Spleen (tissue), 13 donors: ENCODE measurements at regions of chrX and their contacts with region 1.

Region 1: GRCh38 chrX:24054182-24055042 is at the start of gene EIF2S3:
- DNase-seq: peak; percentile 97
- H3K4me3 ChIP-seq: peak within 1 kb of the TSS in 4 of 8 donors; percentile 65 to 91 (median 72)
- H3K27ac ChIP-seq: peak within 1 kb of the TSS; percentile 81 to 92 (median 90)
- H3K4me1 ChIP-seq: peaks cover 0 to 11% (median 0%) of the 10 kb centered on the region in 6 donors
- H3K27me3 ChIP-seq: peaks cover 0 to 6% (median 0%) of the 10 kb centered on the region in 7 donors
- CTCF ChIP-seq: peak; percentile 42 to 92 (median 79)
- POLR2A ChIP-seq: no peak
- total RNA-seq, gene EIF2S3: 124 to 207 (median 162) TPM

Region 2: DNA sequence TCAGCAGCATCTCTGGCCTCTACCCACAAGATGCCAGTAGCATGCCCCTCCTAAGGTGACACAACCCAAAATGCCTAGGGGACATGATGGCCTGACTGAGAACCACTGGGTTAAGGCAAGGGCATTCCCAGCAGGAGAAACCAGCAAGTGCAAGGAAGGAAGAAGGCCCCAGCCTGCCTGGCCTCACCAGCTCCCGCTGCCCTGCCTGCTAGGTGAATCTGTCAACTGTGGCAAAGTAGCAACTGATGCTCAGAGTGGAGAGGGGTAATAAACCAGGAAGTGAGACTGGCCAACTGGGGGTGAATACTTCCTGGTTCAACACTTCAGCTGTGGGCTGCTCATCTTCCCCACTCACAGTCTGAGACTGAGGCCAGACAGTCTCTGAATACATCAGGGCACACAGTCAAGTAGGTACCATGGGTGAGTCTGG is 237.2 kb before region 1 on chrX:
- intact Hi-C with region 1: no loop called
- DNase-seq: peak; percentile 75
- H3K4me3 ChIP-seq: no peak overlapping the region
- H3K27ac ChIP-seq: peak overlapping the region in 4 of 8 donors; percentile 25 to 73 (median 50)
- H3K4me1 ChIP-seq: peaks cover 0 to 8% (median 0%) of the 10 kb centered on the region in 6 donors
- H3K27me3 ChIP-seq: no peaks in the 10 kb centered on the region
- CTCF ChIP-seq: no peak
- POLR2A ChIP-seq: no peak

Region 3: DNA sequence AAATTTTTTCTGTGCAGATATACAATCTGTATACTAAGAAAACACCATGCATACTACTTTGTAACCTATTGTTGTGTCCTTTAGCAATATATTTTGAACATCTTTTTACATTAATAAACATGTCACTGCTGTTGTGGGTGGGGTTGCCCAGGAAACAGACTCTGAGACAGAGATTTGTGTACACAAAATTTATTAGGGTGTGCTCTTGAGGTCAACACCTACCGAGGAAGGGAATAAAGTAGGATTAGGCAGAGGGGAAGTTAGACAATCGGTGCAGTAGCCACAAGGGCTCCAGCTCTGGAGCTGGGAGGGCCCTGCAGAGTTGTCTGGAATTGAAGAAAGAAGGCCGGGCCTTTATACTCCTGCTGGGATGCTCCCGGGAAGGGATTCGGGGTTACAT is 90.2 kb before region 1 on chrX:
- intact Hi-C with region 1: no loop called
- DNase-seq: no peak
- H3K4me3 ChIP-seq: no peak overlapping the region
- H3K27ac ChIP-seq: no peak overlapping the region
- H3K4me1 ChIP-seq: no peaks in the 10 kb centered on the region
- H3K27me3 ChIP-seq: no peaks in the 10 kb centered on the region
- CTCF ChIP-seq: no peak
- POLR2A ChIP-seq: no peak

Region 4: GRCh38 chrX:24149351-24150050 is 95.1 kb after region 1 on chrX and contains the start of gene ZFX:
- intact Hi-C with region 1: loop called (anchors 10 kb)
- DNase-seq: peak; percentile 96
- H3K4me3 ChIP-seq: peak within 1 kb of the TSS; percentile 45 to 83 (median 56)
- H3K27ac ChIP-seq: peak within 1 kb of the TSS; percentile 96 to 99 (median 98)
- H3K4me1 ChIP-seq: peaks cover 51 to 70% (median 62%) of the 10 kb centered on the region in 6 donors
- H3K27me3 ChIP-seq: no peaks in the 10 kb centered on the region
- CTCF ChIP-seq: peak in 1 of 11 experiments; percentile 21
- POLR2A ChIP-seq: no peak
- total RNA-seq, gene ZFX: 58.1 to 105 (median 77.7) TPM